ENCODE measurements at regions of chr9 and their contacts with region 1.

Region 1: GRCh38 chr9:4984621-4985385 is at the start of gene JAK2:
- DNase-seq: peak; percentile 87
- H3K4me3 Mint-ChIP-seq: peak within 1 kb of the TSS; percentile 92
- H3K27ac Mint-ChIP-seq: peak within 1 kb of the TSS; percentile 96
- H3K4me1 Mint-ChIP-seq: peaks cover 54% of the 10 kb centered on the region
- H3K27me3 Mint-ChIP-seq: no peaks in the 10 kb centered on the region
- total RNA-seq, gene JAK2: 30.8 and 32.0 TPM in 2 replicates

Region 2: DNA sequence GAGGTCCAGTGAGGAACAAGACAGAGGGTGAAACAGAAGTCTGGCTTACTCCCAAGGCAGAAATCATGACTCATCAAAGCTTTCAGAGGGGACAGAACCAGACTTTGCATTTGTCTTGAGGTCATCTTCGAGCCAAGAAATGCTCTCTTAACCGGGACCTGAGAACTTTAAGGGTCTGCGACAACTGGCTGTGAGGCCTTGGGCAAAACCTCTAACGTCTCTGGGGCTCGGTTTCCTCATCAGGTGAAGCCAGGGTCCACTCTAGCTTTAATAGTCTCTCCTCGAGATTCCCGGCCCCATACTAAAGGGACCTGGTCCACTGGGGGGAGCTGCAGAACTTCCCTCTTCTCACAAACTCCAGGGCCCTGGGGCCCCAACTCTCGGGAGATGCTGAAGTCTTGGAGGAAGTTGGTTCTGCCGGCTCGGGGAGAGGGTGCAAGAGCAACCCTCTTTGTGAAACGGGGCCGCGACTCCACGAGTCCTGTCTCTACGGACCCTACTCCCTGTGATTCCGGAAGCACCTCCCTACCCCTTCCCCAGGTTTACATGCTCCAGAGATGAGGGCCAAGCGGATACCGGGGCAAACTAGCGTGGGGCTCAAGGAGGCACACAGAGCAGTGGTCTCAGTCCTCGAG is 687.5 kb before region 1 on chr9:
- intact Hi-C with region 1: loop called (anchors 10 kb)
- DNase-seq: peak; percentile 11
- H3K4me3 Mint-ChIP-seq: peak overlapping the region; percentile 95
- H3K27ac Mint-ChIP-seq: peak overlapping the region; percentile 91
- H3K4me1 Mint-ChIP-seq: peaks cover 45% of the 10 kb centered on the region
- H3K27me3 Mint-ChIP-seq: peaks cover 42% of the 10 kb centered on the region

Region 3: DNA sequence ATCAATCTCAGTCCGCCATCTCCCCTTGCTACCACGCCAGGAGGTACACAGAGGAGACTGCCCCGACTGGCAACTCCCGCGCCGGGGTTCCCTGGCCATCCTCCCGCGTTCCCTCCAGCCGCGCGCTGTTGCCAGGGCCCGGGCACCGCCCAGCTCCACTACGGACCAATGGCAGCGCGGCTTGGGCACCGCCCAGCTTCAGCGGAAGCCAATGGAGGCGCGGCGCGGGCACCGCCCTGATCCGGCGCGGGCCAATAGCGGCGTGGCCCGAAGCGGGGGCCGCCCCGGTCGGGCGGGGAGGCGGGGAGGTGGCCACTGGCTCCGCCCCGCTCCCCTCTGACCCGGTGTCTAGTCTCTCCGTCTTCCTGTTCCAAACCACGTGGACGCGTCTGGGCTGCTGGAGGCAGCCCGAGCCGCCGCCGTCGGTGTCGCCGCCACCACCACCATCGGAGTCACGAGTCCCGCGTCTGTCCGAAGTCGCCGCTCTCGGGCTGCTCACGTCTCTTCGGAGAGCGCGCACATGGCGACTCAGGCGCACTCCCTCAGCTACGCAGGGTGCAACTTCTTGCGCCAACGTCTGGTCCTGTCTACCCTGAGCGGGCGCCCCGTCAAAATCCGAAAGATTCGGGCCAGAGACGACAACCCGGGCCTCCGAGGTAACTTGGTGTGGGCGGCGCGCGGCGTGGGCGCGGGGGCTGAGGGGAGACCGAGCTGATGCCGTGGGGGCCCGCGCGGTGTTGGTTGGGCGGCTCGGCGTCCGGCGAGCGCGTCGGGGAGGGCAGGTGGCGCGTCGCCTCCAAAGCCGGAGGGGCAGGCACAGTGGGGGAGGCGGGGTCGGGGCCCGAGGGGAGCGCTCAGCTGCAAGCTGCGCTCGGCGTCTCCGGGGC is 192.0 kb before region 1 on chr9 and contains the start of gene RCL1:
- intact Hi-C with region 1: loop called (anchors 1 kb)
- DNase-seq: peak; percentile 99
- H3K4me3 Mint-ChIP-seq: peak within 1 kb of the TSS; percentile 96
- H3K27ac Mint-ChIP-seq: peak within 1 kb of the TSS; percentile 96
- H3K4me1 Mint-ChIP-seq: peaks cover 62% of the 10 kb centered on the region
- H3K27me3 Mint-ChIP-seq: no peaks in the 10 kb centered on the region
- total RNA-seq, gene RCL1: 53.3 and 53.4 TPM in 2 replicates

Region 4: DNA sequence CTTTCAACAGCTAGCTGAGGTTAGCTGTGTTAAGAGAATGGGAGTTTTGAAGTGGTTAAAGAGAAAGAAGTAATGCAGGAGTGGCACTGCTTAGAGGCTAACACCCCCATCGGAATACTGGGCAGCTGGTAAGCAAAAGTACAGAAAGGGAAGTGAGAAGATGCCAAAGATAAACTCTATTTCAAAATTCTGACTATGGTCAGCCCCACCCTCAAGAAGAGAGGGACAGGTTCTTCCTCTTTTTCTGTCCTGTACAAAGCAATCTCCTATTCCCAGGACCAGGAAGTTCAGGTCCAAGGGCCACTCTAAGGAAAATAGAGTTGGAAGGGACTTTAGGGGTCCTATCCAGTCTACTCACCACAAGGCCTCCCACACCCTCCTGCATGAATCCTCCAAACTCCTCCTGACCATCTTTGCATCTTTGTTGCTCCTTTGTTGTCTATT is 45.7 kb before region 1 on chr9:
- intact Hi-C with region 1: loop called (anchors 1 kb)
- DNase-seq: peak; percentile 33
- H3K4me3 Mint-ChIP-seq: peak overlapping the region; percentile 5
- H3K27ac Mint-ChIP-seq: peak overlapping the region; percentile 74
- H3K4me1 Mint-ChIP-seq: peaks cover 75% of the 10 kb centered on the region
- H3K27me3 Mint-ChIP-seq: no peaks in the 10 kb centered on the region

Region 5: GRCh38 chr9:5402217-5402616 is 417.4 kb after region 1 on chr9:
- intact Hi-C with region 1: no loop called
- DNase-seq: no peak
- H3K4me3 Mint-ChIP-seq: no peak overlapping the region
- H3K27ac Mint-ChIP-seq: no peak overlapping the region
- H3K4me1 Mint-ChIP-seq: peaks cover 21% of the 10 kb centered on the region
- H3K27me3 Mint-ChIP-seq: no peaks in the 10 kb centered on the region

Region 6: DNA sequence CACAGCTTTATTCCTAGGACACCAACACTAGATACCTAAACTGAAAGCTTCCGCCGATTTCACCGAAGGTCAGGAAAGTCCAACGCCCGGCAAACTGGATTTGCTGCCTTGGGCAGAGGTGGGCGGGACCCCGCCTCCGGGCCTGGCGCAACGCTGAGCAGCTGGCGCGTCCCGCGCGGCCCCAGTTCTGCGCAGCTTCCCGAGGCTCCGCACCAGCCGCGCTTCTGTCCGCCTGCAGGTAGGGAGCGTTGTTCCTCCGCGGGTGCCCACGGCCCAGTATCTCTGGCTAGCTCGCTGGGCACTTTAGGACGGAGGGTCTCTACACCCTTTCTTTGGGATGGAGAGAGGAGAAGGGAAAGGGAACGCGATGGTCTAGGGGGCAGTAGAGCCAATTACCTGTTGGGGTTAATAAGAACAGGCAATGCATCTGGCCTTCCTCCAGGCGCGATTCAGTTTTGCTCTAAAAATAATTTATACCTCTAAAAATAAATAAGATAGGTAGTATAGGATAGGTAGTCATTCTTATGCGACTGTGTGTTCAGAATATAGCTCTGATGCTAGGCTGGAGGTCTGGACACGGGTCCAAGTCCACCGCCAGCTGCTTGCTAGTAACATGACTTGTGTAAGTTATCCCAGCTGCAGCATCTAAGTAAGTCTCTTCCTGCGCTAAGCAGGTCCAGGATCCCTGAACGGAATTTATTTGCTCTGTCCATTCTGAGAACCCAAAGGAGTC is 465.7 kb after region 1 on chr9 and contains the start of gene CD274:
- intact Hi-C with region 1: loop called (anchors 5 kb)
- DNase-seq: peak; percentile 85
- H3K4me3 Mint-ChIP-seq: peak within 1 kb of the TSS; percentile 96
- H3K27ac Mint-ChIP-seq: peak within 1 kb of the TSS; percentile 90
- H3K4me1 Mint-ChIP-seq: peaks cover 85% of the 10 kb centered on the region
- H3K27me3 Mint-ChIP-seq: no peaks in the 10 kb centered on the region
- total RNA-seq, gene CD274: 60.4 and 61.7 TPM in 2 replicates

Region 7: DNA sequence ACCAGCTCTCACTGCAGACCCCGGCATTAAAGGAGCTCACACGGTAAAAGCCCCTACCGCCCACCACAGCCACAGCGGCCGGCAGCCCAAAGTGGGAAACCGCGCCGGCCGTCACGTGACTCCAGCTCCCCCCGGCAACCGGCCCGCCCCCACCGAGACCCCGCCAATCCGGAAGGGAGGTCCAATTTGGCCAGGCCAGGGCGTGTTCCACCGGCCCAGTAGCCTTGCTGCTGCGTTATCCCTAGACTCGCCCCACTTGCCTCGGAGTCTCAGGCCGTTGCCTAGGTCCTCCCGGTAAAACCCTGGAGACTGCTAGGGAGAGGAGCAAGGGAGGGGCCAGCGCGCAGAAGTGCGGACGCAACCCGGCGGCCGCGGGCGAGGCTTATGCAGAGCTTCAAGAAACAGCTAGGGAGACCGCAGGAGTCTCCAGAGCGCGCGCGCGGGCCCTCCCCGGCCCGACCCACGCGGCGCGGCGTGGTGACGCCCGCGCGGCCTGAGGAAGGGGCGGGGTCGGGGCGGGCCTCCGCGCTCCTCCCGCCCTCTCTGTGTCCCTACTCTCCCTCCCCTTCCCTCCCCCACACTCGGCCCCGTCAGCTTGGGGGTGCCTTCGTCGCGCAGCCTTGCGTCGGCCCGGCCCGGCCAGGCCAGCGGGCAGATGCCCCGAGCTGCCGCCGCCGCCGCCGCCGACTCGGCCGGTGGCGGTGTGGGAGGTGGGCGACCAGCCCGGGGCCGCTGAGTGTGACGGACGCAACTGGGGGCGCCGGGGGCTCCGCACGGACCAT is 643.9 kb after region 1 on chr9 and contains the start of gene RIC1:
- intact Hi-C with region 1: loop called (anchors 2 kb)
- DNase-seq: peak; percentile 90
- H3K4me3 Mint-ChIP-seq: peak within 1 kb of the TSS; percentile 99
- H3K27ac Mint-ChIP-seq: peak within 1 kb of the TSS; percentile 98
- H3K4me1 Mint-ChIP-seq: peaks cover 74% of the 10 kb centered on the region
- H3K27me3 Mint-ChIP-seq: no peaks in the 10 kb centered on the region
- total RNA-seq, gene RIC1: 20.9 and 22.3 TPM in 2 replicates

Region 8: GRCh38 chr9:5749306-5749705 is 764.5 kb after region 1 on chr9:
- intact Hi-C with region 1: no loop called
- DNase-seq: no peak
- H3K4me3 Mint-ChIP-seq: no peak overlapping the region
- H3K27ac Mint-ChIP-seq: no peak overlapping the region
- H3K4me1 Mint-ChIP-seq: peaks cover 9% of the 10 kb centered on the region
- H3K27me3 Mint-ChIP-seq: no peaks in the 10 kb centered on the region

Region 9: DNA sequence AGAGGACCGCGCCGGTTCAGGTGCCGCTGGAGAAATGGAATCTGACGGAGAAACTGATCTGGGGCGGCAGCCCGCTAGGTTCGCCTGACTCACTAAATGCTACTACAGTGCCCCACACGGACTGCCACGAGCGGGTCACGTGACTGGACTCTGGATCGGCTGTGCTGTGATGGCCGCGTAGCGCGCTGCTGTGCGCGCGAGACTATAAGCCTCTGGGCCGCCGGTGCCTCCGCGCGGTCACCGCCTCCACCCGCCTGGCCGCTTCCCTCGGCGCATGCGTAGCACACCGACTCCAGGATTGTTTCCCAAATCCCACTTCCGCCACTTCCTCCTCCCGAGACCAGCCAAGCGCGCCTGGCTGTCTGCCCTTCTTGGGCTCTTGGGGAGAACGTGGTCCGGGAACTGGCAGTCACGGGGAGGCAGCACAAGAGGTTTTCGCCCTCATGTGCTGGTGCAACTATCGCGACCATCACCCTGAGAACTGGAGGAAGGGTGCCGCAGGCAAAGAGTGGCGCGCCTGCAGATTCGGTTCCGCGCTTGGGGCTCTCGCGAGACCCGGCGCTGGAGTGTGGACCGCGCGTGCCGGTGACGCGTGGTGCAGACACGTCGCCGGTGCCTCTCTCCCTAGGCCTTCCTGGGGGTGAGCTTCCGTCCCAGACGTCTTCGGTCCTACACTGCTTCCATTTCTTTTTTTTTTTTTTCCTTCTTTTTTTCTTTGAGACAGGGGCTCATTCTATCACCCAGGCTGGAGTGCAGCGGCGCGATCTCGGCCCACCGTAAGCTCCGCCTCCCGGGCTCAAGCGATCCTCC is 1696.5 kb after region 1 on chr9:
- intact Hi-C with region 1: loop called (anchors 5 kb)
- DNase-seq: peak; percentile 88
- H3K4me3 Mint-ChIP-seq: peak overlapping the region; percentile 94
- H3K27ac Mint-ChIP-seq: peak overlapping the region; percentile 99
- H3K4me1 Mint-ChIP-seq: peaks cover 24% of the 10 kb centered on the region
- H3K27me3 Mint-ChIP-seq: peaks cover 3% of the 10 kb centered on the region

Measured in activated T-helper 1 cell treated with anti-CD3 and anti-CD28 coated beads, Interleukin-12 subunit alpha, Interleukin-12 subunit beta, Interleukin-2, Interleukin-4 antibody, amounts not matched to agents 30 ng/mL and 10 ng/mL and 1 ng/mL, durations not matched to agents 14 hours and 24 hours and 36 hours (primary cell).